GM10248 (cell line): ENCODE measurements at regions of chr5 and their contacts with region 1.

Region 1: DNA sequence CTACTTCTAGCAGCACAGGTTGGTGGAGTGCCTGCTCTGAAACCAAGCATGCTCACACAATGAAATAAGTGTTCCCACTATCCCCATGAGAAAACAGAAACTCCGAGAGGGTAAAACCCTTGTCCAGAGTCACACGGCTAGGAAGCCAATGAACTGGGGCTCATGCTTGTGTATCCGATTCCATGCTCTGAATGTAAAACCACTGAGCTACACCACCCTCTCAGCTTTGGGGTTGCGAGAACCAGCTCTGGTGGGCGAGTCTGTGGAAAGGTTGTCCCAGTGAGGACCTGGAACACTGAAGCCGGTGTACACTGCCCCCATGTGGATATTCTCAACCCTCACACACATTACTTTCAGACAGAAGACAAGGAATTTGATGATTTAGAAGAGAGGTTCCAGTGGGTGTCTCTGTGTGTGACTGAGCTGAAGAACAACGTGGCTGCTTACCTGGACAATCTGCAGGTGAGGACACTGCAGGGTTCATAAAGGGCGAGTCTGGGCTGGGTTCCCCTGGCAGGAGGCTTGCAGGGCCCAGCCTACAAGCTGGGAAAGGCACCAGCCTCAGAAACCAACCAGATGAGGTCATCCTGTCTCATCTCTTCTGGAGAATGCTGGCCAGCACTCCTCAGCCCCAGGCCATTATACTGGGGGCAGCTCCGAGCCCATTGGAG is 37.4 kb downstream of the ARHGEF37 start:
- DNase-seq: peak; percentile 70
- CTCF ChIP-seq: peak; percentile 61

Region 2: DNA sequence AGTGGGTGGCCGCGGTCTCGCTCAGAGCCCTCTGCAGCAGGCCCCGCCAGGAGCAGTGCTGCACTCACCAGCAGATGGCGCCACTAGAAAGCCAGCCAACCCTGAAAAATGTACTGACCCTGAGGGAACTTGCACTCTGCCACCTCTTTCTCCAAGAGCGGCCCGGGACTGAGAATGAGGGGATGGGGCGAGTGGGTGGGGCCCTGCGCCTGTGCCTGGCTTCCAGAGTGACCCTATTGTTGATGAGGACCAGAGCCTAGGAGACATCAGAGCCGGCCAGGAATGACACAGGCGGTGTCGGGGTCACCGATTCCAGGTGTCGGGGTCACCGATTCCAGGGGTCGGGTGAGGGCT is 236.8 kb before region 1 on chr5:
- CTCF ChIA-PET with region 1: interaction called, 18 read pairs
- POLR2A ChIA-PET with region 1: no interaction called
- DNase-seq: peak; percentile 89
- CTCF ChIP-seq: peak; percentile 94

Region 3: DNA sequence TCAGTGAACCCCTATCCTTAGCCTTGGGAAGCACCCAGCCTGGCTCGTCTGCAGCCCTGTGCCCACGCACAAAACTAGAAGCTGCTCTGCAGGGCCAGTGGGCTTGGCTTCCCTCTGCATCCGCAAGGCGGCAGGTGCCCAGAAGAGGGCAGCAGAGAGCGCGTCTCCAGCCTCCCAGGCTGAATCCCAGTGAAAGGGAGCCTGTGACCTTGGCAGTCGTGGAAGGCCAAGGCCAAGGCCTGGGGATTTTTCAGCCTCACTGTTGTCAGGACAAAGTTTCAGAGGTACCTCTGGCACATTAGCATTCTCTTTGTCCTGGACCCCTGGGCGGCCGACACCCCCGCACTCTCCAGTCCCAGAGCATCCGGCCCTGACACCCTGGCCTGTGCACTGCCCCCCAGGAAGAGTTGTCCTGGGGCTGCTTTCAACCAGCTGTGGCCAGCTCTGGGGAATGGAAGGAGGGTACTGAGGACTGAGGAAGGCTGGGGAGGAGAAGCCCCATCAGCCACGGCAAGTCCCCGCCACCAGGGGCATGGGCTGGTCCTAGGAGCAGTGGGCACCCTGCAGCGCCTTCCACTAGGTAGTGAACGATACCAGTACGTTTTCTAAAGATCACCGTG is 176.0 kb before region 1 on chr5:
- CTCF ChIA-PET with region 1: interaction called, 38 read pairs
- POLR2A ChIA-PET with region 1: no interaction called
- DNase-seq: peak; percentile 87
- CTCF ChIP-seq: peak; percentile 96

Region 4: DNA sequence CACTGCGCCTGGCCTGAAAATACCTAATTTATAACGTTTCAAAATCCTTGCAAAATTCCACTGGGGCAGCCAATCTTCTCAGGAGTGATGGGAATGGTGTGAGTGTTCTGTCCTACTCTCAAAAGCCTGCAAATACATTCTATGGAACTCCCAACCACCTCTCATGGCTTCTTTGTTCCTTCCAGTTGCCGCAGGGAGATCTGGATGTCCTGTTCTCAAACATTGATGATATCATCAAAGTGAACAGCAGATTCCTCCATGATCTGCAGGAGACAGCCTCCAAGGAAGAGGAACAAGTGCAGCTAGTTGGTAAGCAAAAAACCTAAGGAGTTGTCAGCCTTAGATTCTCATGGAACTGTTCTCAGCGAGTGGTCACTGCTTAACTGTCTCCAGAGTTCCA is 17.8 kb before region 1 on chr5:
- CTCF ChIA-PET with region 1: interaction called, 24 read pairs
- POLR2A ChIA-PET with region 1: no interaction called
- DNase-seq: no peak
- CTCF ChIP-seq: no peak

Region 5: GRCh38 chr5:149636851-149637246 is 18.1 kb after region 1 on chr5:
- CTCF ChIA-PET with region 1: interaction called, 26 read pairs
- POLR2A ChIA-PET with region 1: no interaction called
- DNase-seq: peak; percentile 73
- CTCF ChIP-seq: peak; percentile 89

Region 6: GRCh38 chr5:149680810-149681221 is 62.1 kb after region 1 on chr5:
- CTCF ChIA-PET with region 1: no interaction called
- POLR2A ChIA-PET with region 1: no interaction called
- DNase-seq: peak; percentile 85
- CTCF ChIP-seq: no peak